ENCODE measurements at regions of chr3 and their contacts with region 1.

Region 1: GRCh38 chr3:58188173-58188564 is 22.6 kb downstream of the DNASE1L3 start:
- DNase-seq: peak; percentile 18
- H3K4me3 ChIP-seq: no peak overlapping the region
- H3K27ac ChIP-seq: no peak overlapping the region
- H3K4me1 ChIP-seq: peaks cover 6% of the 10 kb centered on the region
- H3K27me3 ChIP-seq: no peaks in the 10 kb centered on the region
- CTCF ChIP-seq: no peak

Region 2: DNA sequence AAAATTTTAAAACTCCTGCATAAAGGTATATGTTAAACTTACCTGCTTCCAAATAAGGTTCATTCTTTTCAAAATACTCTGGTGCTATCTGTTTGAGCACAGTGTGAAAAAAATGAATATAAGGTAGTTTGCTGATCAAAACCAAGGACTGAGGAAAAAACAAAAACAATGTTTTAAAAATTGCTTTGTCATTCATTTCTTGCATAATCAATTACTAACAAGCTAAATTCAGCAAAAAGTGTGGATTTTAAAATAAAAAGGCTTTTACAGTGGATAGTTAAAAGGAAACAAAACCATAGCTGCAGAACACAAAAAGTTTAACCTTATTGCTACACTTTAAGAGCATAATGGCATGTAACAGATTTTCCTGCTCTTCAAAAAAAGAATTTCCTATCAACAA is 526.8 kb before region 1 on chr3:
- CTCF ChIA-PET with region 1: no interaction called
- POLR2A ChIA-PET with region 1: no interaction called
- intact Hi-C with region 1: no loop called
- DNase-seq: no peak
- H3K4me3 ChIP-seq: no peak overlapping the region
- H3K27ac ChIP-seq: no peak overlapping the region
- H3K4me1 ChIP-seq: peaks cover 4% of the 10 kb centered on the region
- H3K27me3 ChIP-seq: no peaks in the 10 kb centered on the region
- CTCF ChIP-seq: no peak

Region 3: GRCh38 chr3:58230876-58231552 is 42.8 kb after region 1 on chr3:
- CTCF ChIA-PET with region 1: no interaction called
- POLR2A ChIA-PET with region 1: interaction called, 16 read pairs
- intact Hi-C with region 1: no loop called
- DNase-seq: peak; percentile 92
- H3K4me3 ChIP-seq: no peak overlapping the region
- H3K27ac ChIP-seq: peak overlapping the region; percentile 98
- H3K4me1 ChIP-seq: peaks cover 55% of the 10 kb centered on the region
- H3K27me3 ChIP-seq: no peaks in the 10 kb centered on the region
- CTCF ChIP-seq: no peak

Region 4: GRCh38 chr3:58299839-58300516 is 111.8 kb after region 1 on chr3:
- CTCF ChIA-PET with region 1: interaction called, 5 read pairs
- POLR2A ChIA-PET with region 1: no interaction called
- intact Hi-C with region 1: loop called (anchors 2 kb)
- DNase-seq: no peak
- H3K4me3 ChIP-seq: no peak overlapping the region
- H3K27ac ChIP-seq: peak overlapping the region; percentile 37
- H3K4me1 ChIP-seq: peaks cover 28% of the 10 kb centered on the region
- H3K27me3 ChIP-seq: no peaks in the 10 kb centered on the region
- CTCF ChIP-seq: peak; percentile 42; the same call in 1 of the 2 replicates

Region 5: DNA sequence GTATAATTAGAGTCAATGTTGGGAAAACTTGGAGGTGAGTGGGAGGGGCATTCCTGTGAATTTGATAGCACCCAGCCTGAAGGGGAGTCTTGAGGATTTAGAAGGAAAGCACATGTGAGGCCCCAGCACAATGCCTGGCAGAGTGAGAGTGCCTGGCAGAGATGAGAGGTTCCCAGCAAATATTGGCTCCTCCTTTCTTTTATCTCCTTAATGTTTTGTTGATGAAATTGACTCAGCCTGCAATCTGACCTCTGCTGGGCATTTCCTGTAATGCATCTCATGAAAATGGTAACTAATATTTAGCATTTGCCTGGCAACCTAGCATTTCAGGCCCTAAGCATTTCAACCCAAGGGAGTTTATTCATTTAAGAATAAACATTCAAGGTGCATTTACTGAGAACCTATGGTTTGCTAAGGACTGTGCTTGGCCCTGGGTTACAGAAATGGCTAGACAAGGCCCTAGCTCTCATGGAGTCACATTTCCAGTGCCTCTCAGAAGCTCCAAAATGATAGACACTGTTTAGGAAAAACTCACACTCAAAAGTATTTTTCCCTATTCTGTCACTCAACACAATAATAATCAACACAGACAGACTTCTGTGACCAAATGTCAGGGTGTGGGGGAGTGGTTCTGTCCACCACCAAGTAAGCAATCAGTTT is 226.5 kb after region 1 on chr3:
- CTCF ChIA-PET with region 1: interaction called, 12 read pairs
- POLR2A ChIA-PET with region 1: no interaction called
- intact Hi-C with region 1: loop called (anchors 5 kb)
- DNase-seq: peak; percentile 63
- H3K4me3 ChIP-seq: no peak overlapping the region
- H3K27ac ChIP-seq: no peak overlapping the region
- H3K4me1 ChIP-seq: peaks cover 5% of the 10 kb centered on the region
- H3K27me3 ChIP-seq: no peaks in the 10 kb centered on the region
- CTCF ChIP-seq: peak; percentile 61